ENCODE measurements at regions of chr7 and their contacts with region 1.

Region 1: DNA sequence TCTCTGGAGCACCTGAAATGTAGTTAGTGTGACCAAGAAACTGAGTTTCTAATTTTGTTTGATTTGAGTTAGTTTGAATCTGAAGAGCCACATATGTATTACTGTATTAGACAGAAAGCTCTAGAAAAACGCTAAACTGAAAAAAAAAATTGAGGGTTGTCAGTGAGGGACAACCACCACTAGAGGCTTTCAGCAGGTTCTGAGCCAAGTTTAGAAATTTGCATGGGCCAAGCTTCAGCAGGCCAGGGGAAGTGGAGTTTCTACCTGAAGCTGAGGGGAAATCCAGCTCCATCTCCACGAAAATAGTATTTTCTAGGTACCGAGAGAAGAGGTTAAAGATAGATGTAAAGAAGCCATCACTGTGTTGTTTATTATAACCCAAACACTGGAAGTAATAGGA is 77.9 kb upstream of the PLXNA4 start:
- DNase-seq: peak; percentile 16
- ATAC-seq: peak; percentile 57
- H3K4me3 Mint-ChIP-seq: peak overlapping the region; percentile 35
- H3K27ac Mint-ChIP-seq: no peak overlapping the region
- H3K4me1 Mint-ChIP-seq: peaks cover 40% of the 10 kb centered on the region
- H3K27me3 Mint-ChIP-seq: no peaks in the 10 kb centered on the region; the same call in 1 of the 2 replicates
- CTCF ChIP-seq: no peak

Region 2: DNA sequence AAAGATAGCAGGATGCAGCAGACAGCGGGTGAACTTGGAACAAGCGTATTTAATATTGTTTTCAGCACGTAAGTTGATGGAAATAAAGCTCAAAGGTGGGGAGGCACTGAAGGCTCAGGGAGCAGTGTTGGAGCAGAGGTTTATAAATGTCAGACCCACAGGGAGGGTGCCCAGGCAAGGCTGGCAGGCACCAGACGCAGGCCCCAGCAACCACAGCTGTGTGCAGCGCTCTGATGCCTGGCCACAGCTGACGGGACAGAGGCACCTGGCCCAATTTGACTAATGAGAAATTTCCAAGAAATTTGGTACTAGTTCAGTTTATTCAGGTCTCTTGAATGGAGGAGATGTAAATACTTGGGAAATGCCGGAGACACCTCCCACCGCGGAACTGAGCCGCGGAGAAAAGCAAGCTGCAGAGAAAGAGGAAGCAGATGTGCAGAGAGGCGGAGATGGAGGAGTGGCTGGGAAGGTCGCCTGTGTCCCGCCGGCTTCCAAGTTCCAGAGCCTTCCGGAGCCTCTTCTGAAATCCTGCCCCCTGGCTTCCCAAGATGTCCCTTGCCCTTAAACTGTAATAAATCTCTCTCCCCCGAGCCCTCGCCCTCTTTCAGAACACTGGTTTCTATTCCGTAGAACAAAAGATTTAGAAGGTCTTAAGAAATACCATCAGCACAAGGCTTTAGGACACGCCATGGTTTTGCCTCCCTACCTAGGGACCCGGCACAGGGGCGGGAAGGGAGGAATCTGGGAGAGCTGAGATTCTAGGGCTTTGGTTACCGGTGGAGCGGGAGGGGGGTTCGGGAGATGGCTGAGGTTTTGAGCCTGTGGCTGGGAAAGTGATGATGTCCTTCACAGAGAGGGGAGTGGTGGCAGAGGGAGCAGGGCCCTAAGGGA is 39.5 kb before region 1 on chr7:
- CTCF ChIA-PET with region 1: interaction called, 15 read pairs
- POLR2A ChIA-PET with region 1: no interaction called
- DNase-seq: peak; percentile 66
- ATAC-seq: peak; percentile 87
- H3K4me3 Mint-ChIP-seq: peak overlapping the region; percentile 70
- H3K27ac Mint-ChIP-seq: 0 out of 2 replicates have a peak overlapping the region, but pooled peaks have one; percentile 37
- H3K4me1 Mint-ChIP-seq: peaks cover 34% of the 10 kb centered on the region
- H3K27me3 Mint-ChIP-seq: peaks cover 10% of the 10 kb centered on the region
- CTCF ChIP-seq: no peak

Region 3: GRCh38 chr7:132625651-132626050 is 28.5 kb before region 1 on chr7:
- CTCF ChIA-PET with region 1: no interaction called
- POLR2A ChIA-PET with region 1: no interaction called
- DNase-seq: no peak
- ATAC-seq: no peak
- H3K4me3 Mint-ChIP-seq: no peak overlapping the region
- H3K27ac Mint-ChIP-seq: no peak overlapping the region
- H3K4me1 Mint-ChIP-seq: no peaks in the 10 kb centered on the region
- H3K27me3 Mint-ChIP-seq: no peaks in the 10 kb centered on the region; the same call in 1 of the 2 replicates
- CTCF ChIP-seq: no peak

Region 4: GRCh38 chr7:132636616-132637015 is 17.5 kb before region 1 on chr7:
- CTCF ChIA-PET with region 1: interaction called, 12 read pairs
- POLR2A ChIA-PET with region 1: no interaction called
- DNase-seq: no peak
- ATAC-seq: no peak
- H3K4me3 Mint-ChIP-seq: no peak overlapping the region
- H3K27ac Mint-ChIP-seq: no peak overlapping the region
- H3K4me1 Mint-ChIP-seq: peaks cover 25% of the 10 kb centered on the region
- H3K27me3 Mint-ChIP-seq: peaks cover 48% of the 10 kb centered on the region
- CTCF ChIP-seq: no peak